Lower leg skin (tissue), 4 donors: ENCODE measurements at regions of chr10 and their contacts with region 1.

Region 1: GRCh38 chr10:17494626-17495260 is 40.3 kb upstream of the ST8SIA6 start:
- DNase-seq: no peak
- H3K4me3 ChIP-seq: no peak overlapping the region
- CTCF ChIP-seq: no peak
- POLR2A ChIP-seq: no peak

Region 2: GRCh38 chr10:17326377-17326776 is 168.4 kb before region 1 on chr10:
- intact Hi-C with region 1: loop called (anchors 5 kb)
- DNase-seq: no peak
- H3K4me3 ChIP-seq: no peak overlapping the region
- CTCF ChIP-seq: no peak
- POLR2A ChIP-seq: no peak